Naive thymus-derived CD4-positive, alpha-beta T cell (primary cell): ENCODE measurements at regions of chr1 and their contacts with region 1.

Region 1: DNA sequence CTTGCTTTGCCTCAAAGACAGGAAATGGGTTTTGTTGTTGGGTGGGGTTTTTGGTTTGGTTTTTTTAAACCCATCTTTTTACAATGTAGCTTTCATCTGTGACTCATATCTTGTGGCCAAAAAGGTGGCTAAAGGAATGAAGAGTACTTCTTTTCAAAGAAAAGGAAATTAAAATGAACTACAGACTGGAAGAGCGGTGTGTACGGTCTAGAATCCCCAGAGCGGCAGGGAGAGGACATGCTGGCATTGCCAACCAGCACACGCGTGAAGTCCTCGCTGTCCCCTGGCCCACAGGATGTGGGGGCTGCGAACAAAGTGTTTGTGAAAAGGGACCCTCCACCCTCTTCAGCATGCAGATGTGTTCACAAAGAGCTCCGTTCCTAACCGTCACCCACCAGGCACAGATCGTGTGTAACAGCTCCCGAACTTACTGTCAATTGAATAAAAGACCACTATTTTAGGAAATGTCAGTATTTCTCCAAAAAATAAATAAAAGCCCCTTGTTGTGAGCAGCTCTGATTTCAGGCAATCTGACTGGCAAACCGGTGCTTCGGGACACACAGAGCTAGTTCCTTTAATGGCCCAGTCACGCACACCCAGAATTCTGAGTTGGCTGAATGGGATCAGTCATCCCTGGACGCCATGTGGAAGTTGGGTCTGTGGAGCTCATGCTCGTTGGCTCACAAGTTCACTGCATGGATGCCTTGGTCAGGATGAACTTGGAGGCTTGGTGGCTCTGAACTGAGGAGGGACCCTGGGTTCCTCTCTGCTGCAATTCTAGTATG is 602.9 kb downstream of the NPHP4 start:
- DNase-seq: peak in 7 of 9 donors; percentile 55 to 79 (median 67)
- ATAC-seq: peak; percentile 71
- H3K4me3 ChIP-seq: peak overlapping the region; percentile 50
- H3K4me3 Mint-ChIP-seq: peak overlapping the region in 8 of 10 donors; percentile 40 to 86 (median 80)
- H3K27ac ChIP-seq: peak overlapping the region; percentile 37
- H3K27ac Mint-ChIP-seq: peak overlapping the region in 7 of 9 donors; percentile 86 to 95 (median 91)
- H3K4me1 ChIP-seq: peaks cover 35 to 58% of the 10 kb centered on the region in 2 donors
- H3K4me1 Mint-ChIP-seq: peaks cover 18 to 34% (median 23%) of the 10 kb centered on the region in 7 donors
- H3K27me3 ChIP-seq: no peaks in the 10 kb centered on the region
- H3K27me3 Mint-ChIP-seq: peaks cover 0 to 12% (median 0%) of the 10 kb centered on the region in 5 donors

Region 2: DNA sequence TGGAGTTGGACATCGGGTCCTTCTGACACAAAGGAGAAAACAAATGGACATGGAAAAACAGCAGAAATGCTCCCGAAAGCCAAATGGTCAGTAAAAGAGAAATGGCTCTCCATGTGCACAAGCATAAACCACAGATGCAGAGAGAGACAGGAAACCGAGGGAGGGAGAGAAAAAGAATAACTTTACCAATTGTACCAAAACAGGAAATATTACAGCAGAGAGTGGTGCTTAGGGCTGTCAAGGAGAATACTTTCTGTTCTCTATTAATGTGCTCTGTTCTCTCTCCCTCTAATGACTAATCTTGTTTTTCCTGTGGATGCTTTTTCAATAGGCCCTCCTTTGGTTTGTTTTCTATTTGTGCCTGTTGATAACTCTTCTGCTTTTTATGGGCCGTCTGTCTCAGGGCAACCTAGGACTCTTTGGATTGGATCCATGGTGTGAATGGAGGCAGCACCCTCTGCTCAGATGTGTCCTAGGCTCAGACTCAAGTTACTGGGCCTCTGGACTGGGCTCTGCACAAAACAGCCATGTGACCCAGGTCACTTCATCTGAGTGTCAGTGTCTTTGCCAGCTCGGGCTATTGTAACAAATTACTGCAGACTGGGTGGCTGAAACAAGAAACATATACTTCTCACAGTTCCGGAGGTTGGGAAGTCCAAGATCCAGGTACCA is 60.1 kb before region 1 on chr1:
- CTCF ChIA-PET with region 1: no interaction called
- POLR2A ChIA-PET with region 1: interaction called, 7 read pairs
- intact Hi-C with region 1: loop called in 1 of 2 experiments (anchors 2 kb)
- DNase-seq: peak in 4 of 9 donors; percentile 3 to 34 (median 12)
- ATAC-seq: peak; percentile 44
- H3K4me3 ChIP-seq: peak overlapping the region; percentile 1
- H3K4me3 Mint-ChIP-seq: peak overlapping the region; percentile 52 to 82 (median 68)
- H3K27ac ChIP-seq: peak overlapping the region; percentile 71
- H3K27ac Mint-ChIP-seq: peak overlapping the region; percentile 90 to 99 (median 96)
- H3K4me1 ChIP-seq: peaks cover 26 to 35% of the 10 kb centered on the region in 2 donors
- H3K4me1 Mint-ChIP-seq: peaks cover 18 to 76% (median 70%) of the 10 kb centered on the region in 7 donors
- H3K27me3 ChIP-seq: no peaks in the 10 kb centered on the region
- H3K27me3 Mint-ChIP-seq: peaks cover 0 to 2% (median 0%) of the 10 kb centered on the region in 5 donors

Region 3: DNA sequence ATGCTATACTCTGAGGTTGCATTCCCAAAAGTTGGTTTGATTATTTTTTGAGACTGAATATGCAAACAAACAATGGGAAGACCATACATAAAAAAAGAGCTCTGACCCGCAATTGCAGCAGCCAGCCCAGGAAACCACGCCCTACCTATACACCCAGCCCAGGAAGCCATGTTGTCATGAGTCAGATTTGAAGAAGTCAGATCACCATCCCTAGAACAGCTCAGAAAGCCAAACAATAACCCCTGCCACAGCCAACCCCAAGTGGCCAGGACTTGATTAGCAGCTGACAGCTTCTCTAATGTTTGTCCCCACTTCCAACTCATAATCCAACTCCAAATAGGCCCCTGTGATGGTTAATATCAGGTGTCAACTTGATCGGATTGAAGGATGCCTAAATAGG is 19.0 kb before region 1 on chr1:
- CTCF ChIA-PET with region 1: no interaction called
- POLR2A ChIA-PET with region 1: interaction called, 5 read pairs
- intact Hi-C with region 1: loop called in 1 of 2 experiments (anchors 2 kb)
- DNase-seq: no peak
- ATAC-seq: no peak
- H3K4me3 ChIP-seq: peak overlapping the region; percentile 14
- H3K4me3 Mint-ChIP-seq: peak overlapping the region in 7 of 10 donors; percentile 2 to 66 (median 38)
- H3K27ac ChIP-seq: no peak overlapping the region
- H3K27ac Mint-ChIP-seq: peak overlapping the region in 2 of 9 donors; percentile 21 to 49
- H3K4me1 ChIP-seq: peaks cover 14 to 15% of the 10 kb centered on the region in 2 donors
- H3K4me1 Mint-ChIP-seq: peaks cover 12 to 40% (median 24%) of the 10 kb centered on the region in 7 donors
- H3K27me3 ChIP-seq: no peaks in the 10 kb centered on the region
- H3K27me3 Mint-ChIP-seq: peaks cover 0 to 8% (median 0%) of the 10 kb centered on the region in 5 donors

Region 4: DNA sequence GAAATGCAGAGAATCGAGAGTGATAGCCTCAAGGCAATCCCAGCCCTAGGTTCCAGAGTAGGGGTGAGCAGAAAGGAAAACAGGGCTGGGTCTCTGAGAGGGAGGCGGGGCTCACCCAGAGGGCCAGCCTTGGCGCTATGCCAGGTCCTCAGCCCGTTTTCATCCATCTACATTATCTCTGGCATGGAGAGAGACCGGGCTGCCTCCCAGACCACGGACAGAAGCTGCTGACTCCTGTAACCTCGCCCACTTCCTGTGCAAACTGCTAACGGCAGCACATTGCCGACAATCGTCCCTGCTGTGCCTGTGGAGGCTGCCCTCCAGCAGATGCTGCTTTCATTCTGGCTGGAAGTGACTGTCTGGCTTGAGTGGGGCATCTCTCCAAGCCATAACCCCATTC is 33.8 kb after region 1 on chr1:
- CTCF ChIA-PET with region 1: no interaction called
- POLR2A ChIA-PET with region 1: interaction called, 4 read pairs
- intact Hi-C with region 1: loop called (anchors 1 to 2 kb)
- DNase-seq: peak in 6 of 9 donors; percentile 21 to 39 (median 23)
- ATAC-seq: peak; percentile 65
- H3K4me3 ChIP-seq: peak overlapping the region; percentile 40
- H3K4me3 Mint-ChIP-seq: peak overlapping the region; percentile 42 to 77 (median 62)
- H3K27ac ChIP-seq: no peak overlapping the region
- H3K27ac Mint-ChIP-seq: peak overlapping the region in 2 of 9 donors; percentile 19 to 50
- H3K4me1 ChIP-seq: peaks cover 17 to 18% of the 10 kb centered on the region in 2 donors
- H3K4me1 Mint-ChIP-seq: peaks cover 17 to 36% (median 28%) of the 10 kb centered on the region in 7 donors
- H3K27me3 ChIP-seq: no peaks in the 10 kb centered on the region
- H3K27me3 Mint-ChIP-seq: peaks cover 4 to 46% (median 11%) of the 10 kb centered on the region in 5 donors